Panc1 (cell line): ENCODE measurements at regions of chr10 and their contacts with region 1.

Region 1: DNA sequence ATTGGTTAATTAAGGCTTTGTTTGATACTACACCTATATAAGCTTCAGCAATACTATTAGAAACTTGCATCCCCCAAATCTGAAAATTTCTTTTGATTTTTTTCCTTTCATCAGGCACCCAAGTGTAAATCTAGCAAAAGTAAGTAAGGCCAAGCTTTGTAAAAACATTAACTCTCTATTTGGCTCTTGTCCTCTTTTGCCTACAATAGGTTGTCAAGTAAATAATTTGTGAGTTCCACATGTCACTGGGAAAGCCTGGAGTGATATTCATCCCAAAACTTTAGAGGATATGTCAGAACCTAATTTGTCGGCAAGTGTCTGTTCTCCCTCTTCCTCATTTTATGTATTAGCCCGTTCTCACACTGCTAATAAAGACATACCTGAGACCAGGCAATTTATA is 492.4 kb downstream of the IPMK start:
- DNase-seq: no peak
- ATAC-seq: no peak
- H3K4me3 ChIP-seq: no peak overlapping the region
- H3K27ac ChIP-seq: no peak overlapping the region
- H3K4me1 ChIP-seq: no peaks in the 10 kb centered on the region
- H3K27me3 ChIP-seq: no peaks in the 10 kb centered on the region
- CTCF ChIP-seq: no peak

Region 2: GRCh38 chr10:57811791-57812190 is 36.5 kb after region 1 on chr10:
- CTCF ChIA-PET with region 1: no interaction called
- POLR2A ChIA-PET with region 1: no interaction called
- in situ Hi-C with region 1: no loop called
- intact Hi-C with region 1: loop called (anchors 1 kb)
- DNase-seq: no peak
- ATAC-seq: no peak
- H3K4me3 ChIP-seq: no peak overlapping the region
- H3K27ac ChIP-seq: no peak overlapping the region
- H3K4me1 ChIP-seq: no peaks in the 10 kb centered on the region
- H3K27me3 ChIP-seq: no peaks in the 10 kb centered on the region
- CTCF ChIP-seq: no peak